Naive thymus-derived CD8-positive, alpha-beta T cell (primary cell): ENCODE measurements at regions of chr1 and their contacts with region 1.

Region 1: DNA sequence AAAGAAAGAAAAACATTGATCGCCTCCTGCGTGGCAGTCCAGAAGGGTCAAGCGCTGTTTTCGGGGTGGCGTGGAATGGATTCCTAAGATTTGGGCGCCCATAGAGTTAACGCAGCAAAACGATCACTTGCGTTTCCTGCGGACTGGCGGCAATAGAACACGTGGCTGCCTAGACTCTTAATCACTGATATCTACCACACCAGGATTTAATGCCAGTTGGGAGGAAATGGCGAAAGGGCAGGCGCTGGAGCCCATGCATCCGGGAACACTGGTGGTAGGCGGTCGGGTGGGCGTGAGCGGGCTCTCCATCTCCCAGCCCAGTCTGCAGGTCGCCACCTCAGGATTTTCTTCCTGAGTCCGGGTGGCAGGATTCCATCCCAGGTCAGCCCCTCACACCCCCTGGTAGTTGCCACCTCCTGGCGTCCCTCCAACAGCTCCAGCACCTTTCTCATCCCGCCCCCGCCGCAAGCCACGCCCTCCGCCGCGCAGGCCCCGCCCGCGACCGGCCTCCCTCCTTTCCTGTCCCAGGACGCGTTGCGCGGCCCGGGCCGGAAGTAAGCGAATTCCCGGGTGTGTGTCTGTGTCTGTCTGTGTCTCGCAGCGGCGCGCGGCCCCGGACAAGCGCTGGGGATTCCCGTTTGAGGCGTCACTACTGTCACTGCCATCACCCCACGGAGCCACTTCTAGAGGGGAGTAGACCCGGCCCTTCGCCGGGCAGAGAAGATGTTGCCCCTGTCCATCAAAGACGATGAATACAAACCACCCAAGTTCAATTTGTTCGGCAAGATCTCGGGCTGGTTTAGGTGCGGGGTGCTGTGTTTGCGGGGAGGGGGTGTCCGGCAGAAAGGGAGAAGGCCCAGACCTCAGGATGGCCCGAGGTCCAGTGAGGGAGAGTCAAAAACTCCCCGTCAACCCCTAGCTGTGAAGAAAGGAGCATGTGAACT is at the start of gene SLC30A7:
- DNase-seq: peak; percentile 92 to 98 (median 94)
- ATAC-seq: peak; percentile 78
- H3K4me3 Mint-ChIP-seq: peak within 1 kb of the TSS; percentile 96 to 100 (median 99)
- H3K27ac Mint-ChIP-seq: peak within 1 kb of the TSS; percentile 98 to 100 (median 100)
- H3K4me1 Mint-ChIP-seq: peaks cover 14 to 60% (median 48%) of the 10 kb centered on the region in 4 donors
- H3K27me3 Mint-ChIP-seq: peaks cover 0 to 6% (median 0%) of the 10 kb centered on the region in 5 donors
- polyA plus RNA-seq, gene SLC30A7: 8.1 to 10.8 (median 10.5) TPM

Region 2: GRCh38 chr1:100909018-100909417 is 13.2 kb after region 1 on chr1:
- POLR2A ChIA-PET with region 1: interaction called, 10 read pairs
- DNase-seq: no peak
- ATAC-seq: no peak
- H3K4me3 Mint-ChIP-seq: no peak overlapping the region
- H3K27ac Mint-ChIP-seq: peak overlapping the region in 3 of 10 donors; percentile 8 to 55 (median 29)
- H3K4me1 Mint-ChIP-seq: peaks cover 20 to 42% (median 39%) of the 10 kb centered on the region in 4 donors
- H3K27me3 Mint-ChIP-seq: no peaks in the 10 kb centered on the region